MCF 10A (cell line): ENCODE measurements at regions of chr1 and their contacts with region 1.

Region 1: GRCh38 chr1:246587606-246588005 is 21.4 kb downstream of the CNST start:
- DNase-seq: peak; percentile 81
- H3K4me3 Mint-ChIP-seq: peak overlapping the region; percentile 28
- H3K27ac Mint-ChIP-seq: peak overlapping the region; percentile 82
- H3K4me1 Mint-ChIP-seq: peaks cover 28% of the 10 kb centered on the region
- H3K27me3 Mint-ChIP-seq: no peaks in the 10 kb centered on the region
- CTCF ChIP-seq: no peak

Region 2: DNA sequence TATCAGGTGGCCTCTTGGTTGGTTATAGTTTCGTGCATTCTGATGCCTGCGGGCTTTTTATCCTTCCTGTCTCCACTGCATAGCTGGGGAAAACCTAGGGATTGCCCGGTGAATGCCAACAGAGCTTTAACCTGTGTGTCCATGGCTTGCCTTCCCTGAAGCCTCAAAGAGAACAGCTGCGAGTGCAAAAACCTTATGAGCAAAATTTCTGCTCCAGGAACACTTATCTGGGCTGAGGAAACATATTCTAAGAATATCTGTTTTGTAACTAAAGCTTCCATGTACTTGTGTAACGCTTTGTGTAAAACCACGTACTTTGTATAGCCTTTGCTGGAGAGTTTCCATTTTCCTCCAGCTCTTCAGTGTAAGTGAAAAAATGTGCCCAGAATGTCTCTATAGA is 14.1 kb before region 1 on chr1:
- CTCF ChIA-PET with region 1: interaction called, 7 read pairs
- POLR2A ChIA-PET with region 1: interaction called, 43 read pairs
- intact Hi-C with region 1: no loop called
- DNase-seq: no peak
- H3K4me3 Mint-ChIP-seq: no peak overlapping the region
- H3K27ac Mint-ChIP-seq: no peak overlapping the region
- H3K4me1 Mint-ChIP-seq: peaks cover 22% of the 10 kb centered on the region
- H3K27me3 Mint-ChIP-seq: no peaks in the 10 kb centered on the region
- CTCF ChIP-seq: no peak

Region 3: DNA sequence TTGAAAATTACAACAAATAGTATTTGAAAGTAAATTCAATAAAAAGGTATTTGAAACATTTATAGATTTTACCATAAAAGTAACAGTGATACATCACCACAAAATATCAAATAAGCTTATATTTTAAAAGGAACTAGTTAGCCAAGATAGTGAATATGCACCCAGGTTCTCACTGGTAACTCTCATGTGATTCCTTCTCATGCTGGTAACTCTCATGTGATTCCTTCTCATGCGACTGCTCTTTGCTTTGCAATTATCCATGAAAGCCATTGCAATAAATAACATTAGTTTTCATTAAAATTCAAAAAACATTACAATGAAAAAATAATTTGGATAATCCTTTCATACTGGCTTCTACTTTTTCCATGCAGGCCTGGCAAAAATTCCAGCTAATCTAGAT is 268.8 kb after region 1 on chr1:
- CTCF ChIA-PET with region 1: no interaction called
- POLR2A ChIA-PET with region 1: no interaction called
- intact Hi-C with region 1: no loop called
- DNase-seq: no peak
- H3K4me3 Mint-ChIP-seq: no peak overlapping the region
- H3K27ac Mint-ChIP-seq: no peak overlapping the region
- H3K4me1 Mint-ChIP-seq: no peaks in the 10 kb centered on the region
- H3K27me3 Mint-ChIP-seq: no peaks in the 10 kb centered on the region
- CTCF ChIP-seq: no peak

Region 4: DNA sequence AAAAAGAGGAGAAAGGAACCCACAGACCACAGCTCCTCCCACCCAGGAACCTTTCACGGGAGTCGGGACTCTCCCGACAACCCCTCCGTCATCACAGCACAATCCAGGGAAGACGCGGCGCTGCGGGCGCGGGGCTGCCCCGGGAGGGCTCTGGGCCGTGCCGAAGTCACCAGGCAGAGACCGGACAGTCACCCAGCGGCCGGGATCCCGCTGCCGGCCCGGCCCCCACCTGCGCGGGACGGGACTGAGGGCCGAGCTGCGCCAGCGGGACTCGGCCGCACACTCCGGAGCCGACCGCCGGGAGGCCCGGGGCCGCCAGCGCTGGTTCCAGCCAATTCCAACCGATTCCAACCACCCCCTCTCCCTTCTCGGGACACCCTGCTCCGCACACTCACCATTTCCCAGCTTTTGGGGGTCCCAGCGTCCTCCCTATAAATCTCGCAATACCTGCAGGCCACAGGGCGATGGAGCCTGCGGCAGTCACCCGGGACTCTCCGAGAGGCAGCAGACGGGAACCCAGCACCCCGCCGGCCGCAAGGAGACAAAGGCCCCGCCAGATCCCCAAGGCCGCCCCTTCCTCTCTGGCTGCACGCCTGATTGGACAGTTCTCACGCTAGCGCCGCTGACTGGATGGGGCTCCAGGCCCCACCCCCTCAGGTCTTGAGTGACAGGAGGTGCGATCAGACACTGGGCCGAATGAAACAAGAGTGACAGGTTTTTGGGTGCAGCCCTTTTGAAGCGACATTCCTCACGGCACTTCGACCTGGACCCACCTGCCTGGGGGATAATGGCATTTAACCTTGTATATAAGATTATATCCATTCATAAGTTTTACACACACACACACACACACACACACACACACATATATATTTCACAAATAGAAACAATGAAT is 420.2 kb after region 1 on chr1 and contains the start of gene ZNF695:
- CTCF ChIA-PET with region 1: no interaction called
- POLR2A ChIA-PET with region 1: no interaction called
- intact Hi-C with region 1: no loop called
- DNase-seq: peak; percentile 100
- H3K4me3 Mint-ChIP-seq: peak within 1 kb of the TSS; percentile 96
- H3K27ac Mint-ChIP-seq: peak within 1 kb of the TSS; percentile 99
- H3K4me1 Mint-ChIP-seq: no peaks in the 10 kb centered on the region
- H3K27me3 Mint-ChIP-seq: no peaks in the 10 kb centered on the region
- CTCF ChIP-seq: no peak
- total RNA-seq, gene ZNF695: 8.7 and 13.8 TPM in 2 replicates